Naive thymus-derived CD4-positive, alpha-beta T cell (primary cell): ENCODE measurements at regions of chr22 and their contacts with region 1.

Region 1: DNA sequence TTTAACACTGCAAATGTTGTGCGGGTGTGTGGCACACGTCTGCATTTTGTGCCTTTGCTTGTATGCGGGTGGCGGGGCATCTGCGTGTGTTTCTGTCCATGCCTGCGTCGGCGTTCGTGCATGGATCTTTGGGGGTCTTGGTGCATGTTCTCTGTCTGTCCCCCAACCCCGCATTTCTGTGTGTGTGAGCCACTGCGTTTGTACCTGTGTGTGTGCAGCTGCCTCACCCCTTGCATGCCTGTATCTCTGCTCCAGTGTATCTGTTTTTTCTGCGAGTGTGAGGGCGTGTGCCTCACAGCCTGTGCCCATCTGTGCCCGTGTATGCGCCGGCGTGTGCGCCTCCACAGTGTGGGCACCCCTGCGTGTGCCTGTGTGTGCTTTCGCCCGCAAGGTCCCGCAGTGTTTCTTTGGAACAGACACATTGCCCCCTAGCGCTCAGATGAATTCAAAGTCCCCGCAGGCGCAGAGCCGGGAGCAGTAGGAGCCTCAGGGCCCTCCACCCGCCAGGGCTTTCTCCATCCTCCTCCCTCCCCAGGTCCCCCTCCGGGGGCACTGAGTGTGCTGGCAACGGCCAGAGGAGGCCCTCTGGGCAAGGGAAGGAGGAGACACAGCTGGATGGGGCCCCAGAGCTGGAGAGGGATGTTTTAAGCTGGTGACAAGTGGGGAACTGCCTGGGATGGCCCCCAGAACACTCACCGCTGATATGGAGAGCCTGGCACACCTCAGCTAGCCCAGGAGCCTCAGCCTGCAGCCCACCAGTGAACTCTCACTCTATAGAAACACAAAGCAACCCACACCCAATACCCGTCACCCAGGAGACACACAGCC is 3.1 kb upstream of the MN1 start:
- DNase-seq: peak in 8 of 9 donors; percentile 19 to 56 (median 48)
- ATAC-seq: peak; percentile 53
- H3K4me3 ChIP-seq: no peak overlapping the region
- H3K4me3 Mint-ChIP-seq: peak overlapping the region in 9 of 10 donors; percentile 9 to 86 (median 59)
- H3K27ac ChIP-seq: no peak overlapping the region
- H3K27ac Mint-ChIP-seq: no peak overlapping the region
- H3K4me1 ChIP-seq: peaks cover 8 to 18% of the 10 kb centered on the region in 2 donors
- H3K4me1 Mint-ChIP-seq: peaks cover 13 to 31% (median 15%) of the 10 kb centered on the region in 7 donors
- H3K27me3 ChIP-seq: no peaks in the 10 kb centered on the region
- H3K27me3 Mint-ChIP-seq: peaks cover 11 to 45% (median 33%) of the 10 kb centered on the region in 5 donors

Region 2: DNA sequence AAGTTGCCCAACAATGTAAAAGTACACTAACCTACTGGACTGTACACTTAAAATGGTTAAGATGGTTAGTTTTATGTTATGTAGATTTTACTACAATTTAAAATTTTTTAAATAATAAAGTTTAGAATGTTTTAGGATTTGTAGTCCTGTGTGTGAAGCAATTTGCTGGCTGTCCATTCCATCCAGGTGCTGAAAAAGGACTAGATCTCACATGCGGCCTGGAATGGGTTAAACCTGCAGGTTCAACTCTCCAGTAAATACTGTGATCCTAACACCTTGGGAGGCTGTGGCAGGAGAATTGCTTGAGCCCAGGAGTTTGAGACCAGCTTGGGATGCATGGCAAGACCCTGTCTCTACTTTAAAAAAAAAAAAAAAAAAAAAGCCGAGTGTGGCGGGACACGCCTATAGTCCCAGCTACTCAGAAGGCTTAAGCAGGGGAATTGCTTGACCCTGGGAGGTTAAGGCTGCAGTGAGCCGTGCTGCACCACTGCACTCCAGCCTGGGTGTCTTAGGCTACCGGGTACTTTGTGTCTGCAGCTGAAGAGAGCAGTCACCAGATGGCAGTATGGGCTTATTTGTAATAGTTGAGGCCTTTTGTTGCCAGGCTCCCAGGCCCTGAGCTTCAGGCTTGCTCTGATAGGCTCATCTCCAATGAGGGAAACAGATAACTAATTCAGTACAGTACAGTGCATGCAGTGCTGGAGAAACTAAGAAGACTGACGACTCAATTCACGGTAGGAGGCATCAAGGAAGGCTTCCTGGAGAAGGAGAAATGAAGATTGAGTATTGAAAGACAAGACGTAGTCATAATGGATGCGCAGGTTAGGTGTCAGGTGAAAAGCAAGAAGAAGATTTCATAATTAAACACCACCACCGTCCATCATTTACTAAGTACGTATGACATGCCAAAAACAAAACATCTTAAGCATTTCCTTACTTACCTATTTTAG is 1440.3 kb before region 1 on chr22:
- CTCF ChIA-PET with region 1: no interaction called
- POLR2A ChIA-PET with region 1: no interaction called
- intact Hi-C with region 1: loop called in 1 of 2 experiments (anchors 2 kb)
- DNase-seq: peak in 8 of 9 donors; percentile 33 to 56 (median 47)
- ATAC-seq: peak; percentile 84
- H3K4me3 ChIP-seq: no peak overlapping the region
- H3K4me3 Mint-ChIP-seq: no peak overlapping the region
- H3K27ac ChIP-seq: no peak overlapping the region
- H3K27ac Mint-ChIP-seq: no peak overlapping the region
- H3K4me1 ChIP-seq: no peaks in the 10 kb centered on the region
- H3K4me1 Mint-ChIP-seq: peaks cover 4 to 13% (median 6%) of the 10 kb centered on the region in 7 donors
- H3K27me3 ChIP-seq: peaks cover 0 to 3% of the 10 kb centered on the region in 2 donors
- H3K27me3 Mint-ChIP-seq: peaks cover 7 to 18% (median 12%) of the 10 kb centered on the region in 5 donors

Region 3: GRCh38 chr22:26483439-26484359 is 1321.0 kb before region 1 on chr22 and contains the starts of genes HPS4 and SRRD:
- CTCF ChIA-PET with region 1: no interaction called
- POLR2A ChIA-PET with region 1: no interaction called
- intact Hi-C with region 1: loop called in 1 of 2 experiments (anchors 5 kb)
- DNase-seq: peak; percentile 90 to 99 (median 94)
- ATAC-seq: peak; percentile 93
- H3K4me3 ChIP-seq: peak within 1 kb of the TSS; percentile 61
- H3K4me3 Mint-ChIP-seq: peak within 1 kb of the TSS; percentile 75 to 97 (median 93)
- H3K27ac ChIP-seq: peak within 1 kb of the TSS; percentile 95
- H3K27ac Mint-ChIP-seq: peak within 1 kb of the TSS; percentile 93 to 99 (median 98)
- H3K4me1 ChIP-seq: peaks cover 17 to 48% of the 10 kb centered on the region in 2 donors
- H3K4me1 Mint-ChIP-seq: peaks cover 47 to 77% (median 68%) of the 10 kb centered on the region in 7 donors
- H3K27me3 ChIP-seq: no peaks in the 10 kb centered on the region
- H3K27me3 Mint-ChIP-seq: no peaks in the 10 kb centered on the region
- total RNA-seq, gene HPS4: 45.5 to 64.3 (median 59.1) TPM
- total RNA-seq, gene SRRD: 18.9 to 22.8 (median 20.1) TPM

Region 4: GRCh38 chr22:26756675-26757293 is 1047.9 kb before region 1 on chr22:
- CTCF ChIA-PET with region 1: no interaction called
- POLR2A ChIA-PET with region 1: no interaction called
- intact Hi-C with region 1: loop called in 1 of 2 experiments (anchors 10 kb)
- DNase-seq: peak in 6 of 9 donors; percentile 11 to 79 (median 43)
- ATAC-seq: peak; percentile 81
- H3K4me3 ChIP-seq: no peak overlapping the region
- H3K4me3 Mint-ChIP-seq: no peak overlapping the region
- H3K27ac ChIP-seq: no peak overlapping the region
- H3K27ac Mint-ChIP-seq: no peak overlapping the region
- H3K4me1 ChIP-seq: no peaks in the 10 kb centered on the region
- H3K4me1 Mint-ChIP-seq: peaks cover 5 to 28% (median 6%) of the 10 kb centered on the region in 7 donors
- H3K27me3 ChIP-seq: no peaks in the 10 kb centered on the region
- H3K27me3 Mint-ChIP-seq: no peaks in the 10 kb centered on the region

Region 5: GRCh38 chr22:26835929-26836528 is 968.7 kb before region 1 on chr22:
- CTCF ChIA-PET with region 1: no interaction called
- POLR2A ChIA-PET with region 1: no interaction called
- intact Hi-C with region 1: loop called in 1 of 2 experiments (anchors 10 kb)
- DNase-seq: peak in 7 of 9 donors; percentile 7 to 53 (median 20)
- ATAC-seq: peak; percentile 52
- H3K4me3 ChIP-seq: no peak overlapping the region
- H3K4me3 Mint-ChIP-seq: no peak overlapping the region
- H3K27ac ChIP-seq: no peak overlapping the region
- H3K27ac Mint-ChIP-seq: no peak overlapping the region
- H3K4me1 ChIP-seq: no peaks in the 10 kb centered on the region
- H3K4me1 Mint-ChIP-seq: peaks cover 0 to 4% (median 0%) of the 10 kb centered on the region in 7 donors
- H3K27me3 ChIP-seq: no peaks in the 10 kb centered on the region
- H3K27me3 Mint-ChIP-seq: no peaks in the 10 kb centered on the region

Region 6: GRCh38 chr22:27405672-27406388 is 398.9 kb before region 1 on chr22:
- CTCF ChIA-PET with region 1: no interaction called
- POLR2A ChIA-PET with region 1: no interaction called
- intact Hi-C with region 1: loop called (anchors 5 to 10 kb)
- DNase-seq: peak in 1 of 9 donors; percentile 25
- ATAC-seq: no peak
- H3K4me3 ChIP-seq: no peak overlapping the region
- H3K4me3 Mint-ChIP-seq: no peak overlapping the region
- H3K27ac ChIP-seq: no peak overlapping the region
- H3K27ac Mint-ChIP-seq: no peak overlapping the region
- H3K4me1 ChIP-seq: no peaks in the 10 kb centered on the region
- H3K4me1 Mint-ChIP-seq: no peaks in the 10 kb centered on the region
- H3K27me3 ChIP-seq: no peaks in the 10 kb centered on the region
- H3K27me3 Mint-ChIP-seq: peaks cover 0 to 49% (median 25%) of the 10 kb centered on the region in 5 donors

Region 7: GRCh38 chr22:27790376-27791158 is 14.1 kb before region 1 on chr22:
- CTCF ChIA-PET with region 1: no interaction called
- POLR2A ChIA-PET with region 1: no interaction called
- intact Hi-C with region 1: no loop called
- DNase-seq: no peak
- ATAC-seq: no peak
- H3K4me3 ChIP-seq: no peak overlapping the region
- H3K4me3 Mint-ChIP-seq: no peak overlapping the region
- H3K27ac ChIP-seq: no peak overlapping the region
- H3K27ac Mint-ChIP-seq: no peak overlapping the region
- H3K4me1 ChIP-seq: no peaks in the 10 kb centered on the region
- H3K4me1 Mint-ChIP-seq: no peaks in the 10 kb centered on the region
- H3K27me3 ChIP-seq: no peaks in the 10 kb centered on the region
- H3K27me3 Mint-ChIP-seq: peaks cover under 1 to 13% (median 6%) of the 10 kb centered on the region in 5 donors

Region 8: GRCh38 chr22:27919222-27919941 is 114.7 kb after region 1 on chr22 and contains the start of gene PITPNB:
- CTCF ChIA-PET with region 1: no interaction called
- POLR2A ChIA-PET with region 1: interaction called, 4 read pairs
- intact Hi-C with region 1: loop called in 1 of 2 experiments (anchors 2 kb)
- DNase-seq: peak; percentile 97 to 100 (median 99)
- ATAC-seq: peak; percentile 95
- H3K4me3 ChIP-seq: peak within 1 kb of the TSS; percentile 84
- H3K4me3 Mint-ChIP-seq: peak within 1 kb of the TSS; percentile 97 to 100 (median 99)
- H3K27ac ChIP-seq: peak within 1 kb of the TSS; percentile 94
- H3K27ac Mint-ChIP-seq: peak within 1 kb of the TSS; percentile 93 to 99 (median 99)
- H3K4me1 ChIP-seq: peaks cover 29 to 32% of the 10 kb centered on the region in 2 donors
- H3K4me1 Mint-ChIP-seq: peaks cover 56 to 85% (median 75%) of the 10 kb centered on the region in 7 donors
- H3K27me3 ChIP-seq: no peaks in the 10 kb centered on the region
- H3K27me3 Mint-ChIP-seq: peaks cover 0 to 4% (median 0%) of the 10 kb centered on the region in 5 donors
- total RNA-seq, gene PITPNB: 56.3 to 98.8 (median 62.8) TPM

Region 9: GRCh38 chr22:28358312-28358711 is 553.6 kb after region 1 on chr22:
- CTCF ChIA-PET with region 1: no interaction called
- POLR2A ChIA-PET with region 1: no interaction called
- intact Hi-C with region 1: no loop called
- DNase-seq: no peak
- ATAC-seq: no peak
- H3K4me3 ChIP-seq: no peak overlapping the region
- H3K4me3 Mint-ChIP-seq: no peak overlapping the region
- H3K27ac ChIP-seq: no peak overlapping the region
- H3K27ac Mint-ChIP-seq: no peak overlapping the region
- H3K4me1 ChIP-seq: no peaks in the 10 kb centered on the region
- H3K4me1 Mint-ChIP-seq: peaks cover 0 to 11% (median 0%) of the 10 kb centered on the region in 7 donors
- H3K27me3 ChIP-seq: no peaks in the 10 kb centered on the region
- H3K27me3 Mint-ChIP-seq: peaks cover 0 to 4% (median 0%) of the 10 kb centered on the region in 5 donors